Caco-2 (cell line): ENCODE measurements at regions of chr20 and their contacts with region 1.

Region 1: GRCh38 chr20:740141-740540 is 28.2 kb downstream of the SLC52A3 start:
- DNase-seq: peak in 1 of 2 experiments; percentile 24
- H3K4me3 ChIP-seq: no peak overlapping the region
- H3K4me3 Mint-ChIP-seq: no peak overlapping the region
- H3K27ac Mint-ChIP-seq: no peak overlapping the region
- H3K4me1 ChIP-seq: no peaks in the 10 kb centered on the region; the same call in 1 of the 2 replicates
- H3K4me1 Mint-ChIP-seq: peaks cover 5% of the 10 kb centered on the region
- H3K27me3 ChIP-seq: no peaks in the 10 kb centered on the region
- H3K27me3 Mint-ChIP-seq: no peaks in the 10 kb centered on the region
- CTCF ChIP-seq: no peak

Region 2: GRCh38 chr20:561437-562231 is 178.5 kb before region 1 on chr20:
- CTCF ChIA-PET with region 1: interaction called, 3 read pairs
- POLR2A ChIA-PET with region 1: no interaction called
- intact Hi-C with region 1: loop called (anchors 1 kb)
- DNase-seq: peak; percentile 77 to 79
- H3K4me3 ChIP-seq: no peak overlapping the region
- H3K4me3 Mint-ChIP-seq: no peak overlapping the region
- H3K27ac Mint-ChIP-seq: no peak overlapping the region
- H3K4me1 ChIP-seq: no peaks in the 10 kb centered on the region; the same call in 1 of the 2 replicates
- H3K4me1 Mint-ChIP-seq: no peaks in the 10 kb centered on the region
- H3K27me3 ChIP-seq: no peaks in the 10 kb centered on the region
- H3K27me3 Mint-ChIP-seq: peaks cover 4% of the 10 kb centered on the region
- CTCF ChIP-seq: peak; percentile 96 to 97

Region 3: GRCh38 chr20:699811-700338 is 40.3 kb before region 1 on chr20:
- CTCF ChIA-PET with region 1: no interaction called
- POLR2A ChIA-PET with region 1: no interaction called
- intact Hi-C with region 1: no loop called
- DNase-seq: no peak
- H3K4me3 ChIP-seq: no peak overlapping the region
- H3K4me3 Mint-ChIP-seq: no peak overlapping the region
- H3K27ac Mint-ChIP-seq: no peak overlapping the region
- H3K4me1 ChIP-seq: no peaks in the 10 kb centered on the region
- H3K4me1 Mint-ChIP-seq: no peaks in the 10 kb centered on the region
- H3K27me3 ChIP-seq: peaks cover 1% of the 10 kb centered on the region
- H3K27me3 Mint-ChIP-seq: peaks cover 20% of the 10 kb centered on the region
- CTCF ChIP-seq: no peak

Region 4: DNA sequence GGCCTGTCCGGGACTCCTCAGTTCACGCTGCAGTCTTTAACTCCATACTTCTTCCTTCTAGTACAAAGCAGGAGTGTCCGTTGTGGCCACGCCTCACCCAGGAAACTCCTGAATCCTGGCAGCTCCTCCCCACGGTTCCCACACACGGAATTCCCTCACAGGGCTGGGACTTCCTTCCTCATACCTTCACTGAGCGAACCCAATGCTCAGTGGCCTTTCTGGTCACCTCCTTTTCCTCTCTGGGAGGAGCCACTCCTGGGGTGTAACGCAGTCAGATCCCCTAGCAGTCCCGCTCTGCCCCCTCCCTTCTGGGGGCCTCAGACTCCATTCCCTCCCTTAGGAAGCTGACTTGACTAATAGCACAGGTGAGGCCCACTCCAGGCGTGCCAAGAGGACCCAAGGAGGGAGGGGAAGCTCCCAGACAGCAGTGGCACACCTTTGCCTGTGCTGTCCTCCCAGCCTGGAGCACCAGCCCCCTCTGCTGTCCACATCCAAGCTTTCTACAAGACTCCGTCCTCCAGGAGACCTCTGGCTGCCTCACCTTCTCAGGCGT is 28.4 kb after region 1 on chr20 and contains the start of gene SLC52A3:
- CTCF ChIA-PET with region 1: interaction called, 14 read pairs
- POLR2A ChIA-PET with region 1: no interaction called
- intact Hi-C with region 1: no loop called
- DNase-seq: peak; percentile 59 to 81
- H3K4me3 ChIP-seq: no peak within 1 kb of the TSS
- H3K4me3 Mint-ChIP-seq: no peak within 1 kb of the TSS
- H3K27ac Mint-ChIP-seq: no peak within 1 kb of the TSS
- H3K4me1 ChIP-seq: no peaks in the 10 kb centered on the region
- H3K4me1 Mint-ChIP-seq: peaks cover 14% of the 10 kb centered on the region
- H3K27me3 ChIP-seq: no peaks in the 10 kb centered on the region
- H3K27me3 Mint-ChIP-seq: peaks cover 4% of the 10 kb centered on the region
- CTCF ChIP-seq: peak; percentile 12 to 48
- total RNA-seq, gene SLC52A3: 0.50 and 0.56 TPM in 2 replicates

Region 5: GRCh38 chr20:1375515-1375914 is 635.4 kb after region 1 on chr20:
- CTCF ChIA-PET with region 1: no interaction called
- POLR2A ChIA-PET with region 1: no interaction called
- intact Hi-C with region 1: no loop called
- DNase-seq: no peak
- H3K4me3 ChIP-seq: no peak overlapping the region
- H3K4me3 Mint-ChIP-seq: no peak overlapping the region
- H3K27ac Mint-ChIP-seq: no peak overlapping the region
- H3K4me1 ChIP-seq: peaks cover 9% of the 10 kb centered on the region
- H3K4me1 Mint-ChIP-seq: peaks cover 7% of the 10 kb centered on the region
- H3K27me3 ChIP-seq: no peaks in the 10 kb centered on the region
- H3K27me3 Mint-ChIP-seq: no peaks in the 10 kb centered on the region
- CTCF ChIP-seq: no peak